A549 (cell line): ENCODE measurements at regions of chr17 and their contacts with region 1.

Region 1: DNA sequence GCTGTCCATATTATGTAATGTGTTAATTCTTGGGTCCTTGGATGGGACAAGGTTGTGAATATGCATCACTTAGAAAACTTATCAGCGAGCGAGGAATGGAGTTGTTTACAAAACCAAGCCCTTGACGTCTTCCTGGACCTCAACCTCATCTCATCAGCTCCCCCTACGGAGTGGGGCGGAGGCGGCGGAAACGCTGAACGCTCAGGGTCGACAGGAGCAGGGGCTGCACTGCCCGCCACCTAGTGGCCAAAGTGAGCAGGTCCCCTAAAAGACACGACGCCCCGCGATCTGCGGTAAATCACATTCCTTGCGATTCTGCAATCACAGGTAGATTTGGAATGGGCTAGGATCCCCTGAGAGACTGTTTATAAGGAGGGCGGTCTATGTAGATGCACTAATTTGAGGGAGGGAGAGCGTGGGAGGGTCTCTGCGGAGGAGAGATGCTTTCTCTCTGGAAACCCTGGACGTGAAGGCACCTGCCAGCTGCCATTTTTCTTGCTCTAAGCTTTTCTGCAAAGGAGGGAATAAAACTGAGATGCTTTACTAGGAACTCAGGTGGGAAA is 5.4 kb upstream of the ICAM2 start:
- DNase-seq: peak; percentile 81 to 87
- ATAC-seq: peak; percentile 93 to 95
- H3K4me3 ChIP-seq: peak overlapping the region; percentile 35
- H3K27ac ChIP-seq: peak overlapping the region in 1 of 2 experiments; percentile 21; a peak in 1 of 6 replicates
- H3K4me1 ChIP-seq: peaks cover 3% of the 10 kb centered on the region; the same call in 1 of the 3 replicates
- CTCF ChIP-seq: peak; percentile 99
- EP300 ChIP-seq: no peak
- POLR2A ChIP-seq: no peak
- RAD21 ChIP-seq: peak; percentile 77 to 80

Region 2: DNA sequence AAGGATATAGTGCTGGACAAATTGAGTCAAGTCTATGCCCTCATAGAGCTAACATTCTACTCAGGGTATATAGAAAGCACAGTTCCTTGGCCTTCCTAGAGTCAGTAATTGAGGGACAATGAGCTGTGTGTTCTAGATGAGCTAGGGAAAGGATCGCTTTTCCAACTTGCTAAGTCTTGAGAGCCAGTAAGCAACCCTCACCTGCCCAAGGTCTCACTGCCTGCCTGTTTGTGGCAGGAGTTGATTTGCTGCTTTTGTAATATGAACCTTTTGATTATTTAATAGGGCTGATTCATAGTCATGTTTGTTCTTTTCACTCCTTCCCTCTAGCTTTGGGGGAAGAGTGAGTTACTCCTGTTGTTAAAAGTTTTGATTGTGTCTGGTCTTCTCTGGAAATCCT is 245.3 kb before region 1 on chr17:
- CTCF ChIA-PET with region 1: no interaction called
- POLR2A ChIA-PET with region 1: no interaction called
- DNase-seq: peak in 1 of 2 experiments; percentile 13
- ATAC-seq: peak; percentile 43 to 51; a peak in 4 of 6 replicates
- H3K4me3 ChIP-seq: no peak overlapping the region
- H3K27ac ChIP-seq: peak overlapping the region in 1 of 2 experiments; percentile 25; a peak in 1 of 6 replicates
- H3K4me1 ChIP-seq: peaks cover 61% of the 10 kb centered on the region
- CTCF ChIP-seq: no peak
- EP300 ChIP-seq: no peak
- POLR2A ChIP-seq: no peak
- RAD21 ChIP-seq: no peak

Region 3: GRCh38 chr17:63925645-63926044 is 100.2 kb before region 1 on chr17:
- CTCF ChIA-PET with region 1: interaction called, 386 read pairs
- POLR2A ChIA-PET with region 1: no interaction called
- DNase-seq: no peak
- ATAC-seq: no peak
- H3K4me3 ChIP-seq: no peak overlapping the region
- H3K27ac ChIP-seq: no peak overlapping the region
- H3K4me1 ChIP-seq: no peaks in the 10 kb centered on the region
- CTCF ChIP-seq: no peak
- EP300 ChIP-seq: no peak
- POLR2A ChIP-seq: no peak
- RAD21 ChIP-seq: no peak

Region 4: DNA sequence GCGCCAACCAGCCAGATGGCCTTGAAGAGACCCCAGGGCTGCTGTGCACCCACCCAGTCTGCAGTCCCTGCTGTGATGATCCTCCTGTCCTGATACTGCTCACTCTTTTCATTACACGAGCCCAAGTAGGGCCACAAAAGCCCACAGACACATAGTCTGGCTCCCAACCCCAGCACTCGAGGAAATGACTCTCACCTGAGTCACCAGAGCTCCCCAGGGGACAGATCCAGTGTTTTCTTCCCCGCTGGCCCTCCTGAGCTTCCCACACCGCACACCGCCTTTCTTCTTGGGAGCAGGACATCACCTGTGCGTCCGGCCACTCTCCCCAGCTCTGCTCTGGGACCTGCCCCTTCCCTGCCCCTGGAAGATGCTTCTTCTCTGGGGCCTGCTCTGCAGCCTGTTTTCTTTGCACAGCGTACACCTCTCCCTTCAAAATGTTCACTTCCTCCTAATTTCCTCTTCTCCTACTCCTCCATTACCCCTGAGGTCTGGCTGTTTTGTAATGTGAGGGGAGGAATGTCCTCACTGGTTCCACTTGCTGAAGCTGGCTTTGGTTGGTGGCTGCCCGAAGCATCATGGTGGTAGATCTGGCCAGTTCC is 51.1 kb before region 1 on chr17:
- CTCF ChIA-PET with region 1: interaction called, 21 read pairs
- POLR2A ChIA-PET with region 1: no interaction called
- DNase-seq: peak in 1 of 2 experiments; percentile 63
- ATAC-seq: peak; percentile 61 to 74
- H3K4me3 ChIP-seq: no peak overlapping the region
- H3K27ac ChIP-seq: peak overlapping the region; percentile 49 to 68; a peak in 5 of 6 replicates
- H3K4me1 ChIP-seq: peaks cover 19% of the 10 kb centered on the region
- CTCF ChIP-seq: no peak
- EP300 ChIP-seq: no peak
- POLR2A ChIP-seq: no peak
- RAD21 ChIP-seq: no peak

Region 5: DNA sequence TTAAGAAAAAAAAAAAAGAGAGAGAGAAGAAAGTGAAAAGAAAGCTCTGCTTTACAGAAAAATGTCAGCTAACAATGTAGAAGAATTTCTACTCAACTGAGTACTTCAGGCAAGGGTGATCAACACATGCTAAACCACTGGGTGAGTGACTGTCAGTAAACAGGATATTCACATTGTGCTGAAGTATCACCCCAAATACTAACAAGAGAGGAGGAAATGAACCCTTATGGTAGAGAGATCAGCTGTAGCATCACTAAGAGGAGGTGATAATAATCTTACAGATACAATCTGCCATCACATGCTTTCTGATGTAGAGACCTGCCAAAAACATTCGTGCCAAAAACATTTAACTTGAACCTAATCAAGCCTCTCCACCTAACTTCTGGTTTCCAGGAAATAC is 25.3 kb after region 1 on chr17:
- CTCF ChIA-PET with region 1: interaction called, 206 read pairs
- POLR2A ChIA-PET with region 1: no interaction called
- DNase-seq: no peak
- ATAC-seq: no peak
- H3K4me3 ChIP-seq: no peak overlapping the region
- H3K27ac ChIP-seq: no peak overlapping the region
- H3K4me1 ChIP-seq: no peaks in the 10 kb centered on the region
- CTCF ChIP-seq: no peak
- EP300 ChIP-seq: no peak
- POLR2A ChIP-seq: no peak
- RAD21 ChIP-seq: no peak

Region 6: DNA sequence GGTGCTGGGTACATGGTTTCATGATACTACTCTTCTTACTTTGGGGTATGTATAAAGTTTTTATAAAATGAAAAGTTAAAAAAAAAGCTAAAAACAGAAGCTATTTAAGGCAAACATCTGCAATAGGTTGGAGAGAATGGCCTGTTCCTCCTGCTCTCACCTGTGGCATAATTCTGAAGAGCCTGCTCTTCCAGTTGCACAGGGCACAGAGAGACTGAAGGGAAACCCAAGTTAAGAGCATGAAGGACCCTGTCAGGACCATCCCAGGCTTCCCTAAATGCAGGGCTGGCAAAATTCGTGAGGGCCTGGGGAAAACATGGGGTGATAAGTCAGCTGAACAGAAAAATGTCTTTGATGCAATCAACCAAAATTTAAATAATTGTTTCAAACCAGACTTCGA is 61.8 kb after region 1 on chr17:
- CTCF ChIA-PET with region 1: interaction called, 27 read pairs
- POLR2A ChIA-PET with region 1: interaction called, 3 read pairs
- DNase-seq: no peak
- ATAC-seq: no peak
- H3K4me3 ChIP-seq: no peak overlapping the region
- H3K27ac ChIP-seq: peak overlapping the region in 1 of 2 experiments; percentile 36; a peak in 1 of 6 replicates
- H3K4me1 ChIP-seq: peaks cover 48% of the 10 kb centered on the region
- CTCF ChIP-seq: no peak
- EP300 ChIP-seq: no peak
- POLR2A ChIP-seq: no peak
- RAD21 ChIP-seq: no peak

Region 7: GRCh38 chr17:64145757-64146417 is 120.1 kb after region 1 on chr17:
- CTCF ChIA-PET with region 1: interaction called, 43 read pairs
- POLR2A ChIA-PET with region 1: interaction called, 5 read pairs
- DNase-seq: peak; percentile 99 to 100
- ATAC-seq: peak; percentile 80 to 92
- H3K4me3 ChIP-seq: peak overlapping the region; percentile 73
- H3K27ac ChIP-seq: peak overlapping the region; percentile 93 to 98
- H3K4me1 ChIP-seq: peaks cover 27% of the 10 kb centered on the region; the same call in 2 of the 3 replicates
- CTCF ChIP-seq: no peak
- EP300 ChIP-seq: no peak
- POLR2A ChIP-seq: peak; percentile 97
- RAD21 ChIP-seq: no peak